Calu3 (cell line): ENCODE measurements at regions of chr10 and their contacts with region 1.

Region 1: GRCh38 chr10:65701168-65701776 is 1224.6 kb upstream of the LRRTM3 start:
- DNase-seq: no peak
- H3K4me3 Mint-ChIP-seq: no peak overlapping the region
- H3K27ac Mint-ChIP-seq: no peak overlapping the region
- H3K4me1 Mint-ChIP-seq: no peaks in the 10 kb centered on the region
- H3K27me3 Mint-ChIP-seq: no peaks in the 10 kb centered on the region
- CTCF ChIP-seq: no peak

Region 2: GRCh38 chr10:65684896-65685295 is 16.4 kb before region 1 on chr10:
- CTCF ChIA-PET with region 1: interaction called, 10 read pairs
- intact Hi-C with region 1: no loop called
- DNase-seq: no peak
- H3K4me3 Mint-ChIP-seq: no peak overlapping the region
- H3K27ac Mint-ChIP-seq: no peak overlapping the region
- H3K4me1 Mint-ChIP-seq: no peaks in the 10 kb centered on the region
- H3K27me3 Mint-ChIP-seq: no peaks in the 10 kb centered on the region
- CTCF ChIP-seq: no peak

Region 3: GRCh38 chr10:65735382-65735781 is 34.1 kb after region 1 on chr10:
- CTCF ChIA-PET with region 1: no interaction called
- intact Hi-C with region 1: loop called (anchors 1 kb)
- DNase-seq: no peak
- H3K4me3 Mint-ChIP-seq: no peak overlapping the region
- H3K27ac Mint-ChIP-seq: no peak overlapping the region
- H3K4me1 Mint-ChIP-seq: no peaks in the 10 kb centered on the region
- H3K27me3 Mint-ChIP-seq: no peaks in the 10 kb centered on the region
- CTCF ChIP-seq: no peak

Region 4: DNA sequence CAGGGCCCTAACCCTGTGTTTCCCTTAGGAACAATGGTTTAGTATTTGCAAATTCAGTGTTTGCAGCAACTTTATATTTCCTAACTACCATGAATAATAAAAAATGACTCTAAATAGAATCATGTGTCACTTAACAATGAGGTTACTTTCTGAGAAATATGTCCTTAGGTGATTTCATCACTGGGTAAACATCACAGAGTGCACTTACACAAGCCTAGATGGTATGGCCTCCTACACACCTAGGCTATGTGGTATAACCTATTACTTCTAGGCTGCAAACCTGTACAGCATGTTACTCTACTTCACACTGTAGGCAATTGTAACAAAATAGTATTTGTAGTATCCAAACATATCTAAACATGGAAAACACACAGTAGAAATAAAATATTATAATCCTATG is 49.9 kb after region 1 on chr10:
- CTCF ChIA-PET with region 1: no interaction called
- intact Hi-C with region 1: no loop called
- DNase-seq: peak; percentile 25
- H3K4me3 Mint-ChIP-seq: no peak overlapping the region
- H3K27ac Mint-ChIP-seq: no peak overlapping the region
- H3K4me1 Mint-ChIP-seq: peaks cover 17% of the 10 kb centered on the region
- H3K27me3 Mint-ChIP-seq: no peaks in the 10 kb centered on the region
- CTCF ChIP-seq: no peak